Activated CD4-positive, alpha-beta T cell treated with anti-CD3 and anti-CD28 coated beads for 36 hours (primary cell): ENCODE measurements at regions of chr9 and their contacts with region 1.

Region 1: DNA sequence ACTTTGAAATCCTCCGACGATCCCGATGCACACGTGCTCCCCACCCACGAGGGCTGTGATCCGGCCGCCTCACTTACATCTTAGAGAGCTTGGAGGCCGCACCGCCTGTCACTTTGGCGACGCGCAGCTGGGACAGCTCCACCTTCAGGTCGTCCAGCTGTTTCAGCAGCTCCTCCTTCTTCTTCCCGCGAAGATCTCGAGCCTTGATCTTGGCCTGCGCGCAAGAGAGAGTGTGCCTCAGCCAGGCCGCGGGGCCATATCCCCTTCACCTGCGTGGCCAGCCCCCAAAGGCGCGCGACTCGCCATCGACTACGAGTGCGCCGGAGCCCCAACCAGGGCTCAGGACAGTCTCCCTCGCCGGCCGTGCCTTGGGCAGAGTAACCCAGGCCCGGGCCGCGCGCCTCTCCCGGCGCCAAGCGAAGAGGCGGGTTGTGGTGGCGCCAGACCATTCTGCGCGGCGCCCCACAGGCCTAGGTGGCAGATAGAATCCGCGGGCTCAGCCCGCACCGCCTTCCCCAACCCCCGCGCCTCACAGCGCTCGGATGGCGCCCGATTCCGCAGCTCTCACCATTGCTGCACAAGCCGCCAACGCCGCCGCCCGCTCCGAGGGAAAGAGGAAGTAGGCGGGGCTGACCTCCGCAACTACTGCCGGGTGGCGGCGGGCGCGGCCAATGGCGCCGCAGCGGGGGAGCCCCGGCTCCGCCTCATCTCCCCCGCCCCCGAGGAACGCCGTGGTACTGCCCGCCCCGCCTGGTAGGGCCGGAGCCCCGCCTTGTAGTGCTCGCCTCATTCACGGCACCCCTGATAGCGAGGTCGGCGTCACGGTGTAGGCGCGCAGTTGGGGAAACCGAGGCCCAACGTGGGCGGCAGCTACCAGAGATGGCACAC is at the starts of genes ARPC5L and RPL35:
- DNase-seq: peak; percentile 98
- ATAC-seq: peak; percentile 95
- H3K4me3 Mint-ChIP-seq: peak within 1 kb of the TSS; percentile 95
- H3K27ac Mint-ChIP-seq: peak within 1 kb of the TSS; percentile 95
- H3K4me1 Mint-ChIP-seq: peaks cover 46% of the 10 kb centered on the region
- H3K27me3 Mint-ChIP-seq: no peaks in the 10 kb centered on the region
- total RNA-seq, gene ARPC5L: 51.9 to 95.9 TPM
- total RNA-seq, gene RPL35: 2,227 to 2,561 TPM

Region 2: DNA sequence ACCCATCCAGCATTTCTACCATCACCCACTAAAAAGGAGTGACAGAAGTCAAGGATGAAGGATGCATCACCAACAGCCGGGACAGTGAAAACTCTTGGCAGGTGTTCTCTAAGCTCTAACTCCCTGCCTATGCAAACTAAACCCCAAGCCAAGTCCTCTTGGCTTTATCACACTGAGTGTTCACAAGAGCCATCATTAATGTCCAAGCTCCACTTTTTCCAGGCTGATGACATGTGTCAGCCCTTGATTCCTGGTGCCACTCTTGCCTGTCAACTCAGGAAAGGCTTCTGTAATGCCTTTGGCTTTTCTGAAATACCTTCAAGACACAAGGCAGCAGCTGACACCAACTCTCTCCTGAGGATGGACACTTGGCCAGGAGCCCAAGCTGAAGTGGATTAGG is 177.4 kb before region 1 on chr9:
- CTCF ChIA-PET with region 1: no interaction called
- POLR2A ChIA-PET with region 1: no interaction called
- intact Hi-C with region 1: no loop called
- DNase-seq: no peak
- ATAC-seq: no peak
- H3K4me3 Mint-ChIP-seq: no peak overlapping the region
- H3K27ac Mint-ChIP-seq: no peak overlapping the region
- H3K4me1 Mint-ChIP-seq: no peaks in the 10 kb centered on the region
- H3K27me3 Mint-ChIP-seq: peaks cover 9% of the 10 kb centered on the region

Region 3: DNA sequence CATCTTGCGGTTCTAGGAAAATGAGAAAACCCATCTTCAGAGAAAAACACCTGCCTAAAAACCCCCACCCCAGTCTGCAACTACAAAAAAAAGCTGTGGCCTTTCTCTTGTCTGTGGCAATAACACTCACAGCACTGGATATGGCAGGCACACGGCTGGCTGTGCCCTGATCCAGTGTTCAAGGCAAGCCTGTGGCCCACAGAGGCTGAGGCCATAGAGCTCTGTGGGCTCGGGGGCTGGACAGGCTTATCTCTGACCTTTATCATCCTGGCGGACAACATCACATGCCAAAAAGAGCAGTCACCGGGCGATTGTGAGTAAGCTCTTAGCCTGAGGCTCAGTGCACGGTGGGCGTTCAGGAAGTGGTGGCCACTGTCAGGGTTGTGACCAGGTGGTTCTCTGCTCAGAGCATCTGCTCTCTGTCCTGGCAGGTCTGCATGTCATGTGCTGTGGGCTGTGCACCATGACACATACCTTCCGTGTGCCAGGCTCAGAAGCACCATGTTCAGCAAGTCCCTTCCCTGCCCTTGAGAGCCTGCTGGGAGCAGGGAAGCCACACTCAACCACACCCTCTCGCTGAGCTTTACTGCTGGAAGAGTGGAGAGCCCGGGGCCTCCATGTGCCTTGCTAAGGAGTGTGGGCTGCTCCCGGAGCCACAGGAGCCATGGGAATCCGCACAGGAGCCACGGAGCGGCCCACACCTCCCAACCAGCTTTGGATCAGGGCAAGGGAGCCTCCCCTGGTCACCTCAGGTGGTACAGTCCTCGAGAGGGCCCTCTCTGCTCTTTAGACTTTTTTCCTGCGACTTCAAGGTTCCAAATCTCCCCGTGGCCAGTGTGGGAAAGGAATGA is 42.9 kb before region 1 on chr9:
- CTCF ChIA-PET with region 1: no interaction called
- POLR2A ChIA-PET with region 1: no interaction called
- intact Hi-C with region 1: no loop called
- DNase-seq: peak; percentile 51
- ATAC-seq: peak; percentile 86
- H3K4me3 Mint-ChIP-seq: no peak overlapping the region
- H3K27ac Mint-ChIP-seq: peak overlapping the region; percentile 65
- H3K4me1 Mint-ChIP-seq: peaks cover 8% of the 10 kb centered on the region
- H3K27me3 Mint-ChIP-seq: peaks cover 4% of the 10 kb centered on the region

Region 4: DNA sequence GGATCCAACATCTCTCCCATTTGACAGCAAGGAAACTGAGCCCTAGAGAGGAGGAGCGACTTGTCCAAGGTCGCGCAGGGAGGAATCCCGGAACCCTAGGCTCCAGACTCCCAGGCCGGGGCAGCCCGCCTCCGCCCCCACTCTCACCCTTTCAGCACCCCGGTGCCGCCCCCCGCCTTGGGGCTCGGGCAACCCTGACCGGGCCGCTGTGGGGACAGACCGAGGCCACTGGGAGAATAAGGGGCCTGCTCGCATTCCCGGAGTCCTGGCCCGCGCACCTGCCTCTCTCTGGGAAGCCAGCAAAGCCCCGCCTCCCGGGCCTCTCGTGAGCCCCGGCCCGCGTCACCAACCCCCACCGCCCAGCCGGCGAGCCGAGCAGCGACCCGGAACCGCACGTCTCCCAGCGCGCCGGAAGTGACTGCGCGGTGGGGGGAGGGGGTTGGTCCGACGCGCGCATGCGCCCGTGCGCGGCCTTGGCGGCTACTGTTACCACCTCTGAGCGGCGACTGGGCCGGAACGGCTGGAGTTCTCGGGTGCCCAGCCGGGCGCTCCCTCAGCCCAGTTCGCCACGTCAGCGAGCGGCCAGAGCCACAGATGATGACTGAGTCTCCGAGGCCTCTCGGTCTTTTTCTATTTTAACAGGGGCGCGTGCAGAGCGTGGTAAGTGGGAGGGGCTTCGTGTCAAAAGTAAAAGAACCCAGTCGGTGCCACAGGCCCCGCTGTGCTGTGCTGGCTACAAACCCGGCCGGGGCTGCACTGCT is 79.3 kb after region 1 on chr9 and contains the start of gene GOLGA1:
- CTCF ChIA-PET with region 1: no interaction called
- POLR2A ChIA-PET with region 1: interaction called, 4 read pairs
- intact Hi-C with region 1: loop called in 1 of 2 experiments (anchors 1 kb)
- DNase-seq: peak; percentile 96
- ATAC-seq: peak; percentile 89
- H3K4me3 Mint-ChIP-seq: peak within 1 kb of the TSS; percentile 93
- H3K27ac Mint-ChIP-seq: peak within 1 kb of the TSS; percentile 99
- H3K4me1 Mint-ChIP-seq: peaks cover 20% of the 10 kb centered on the region
- H3K27me3 Mint-ChIP-seq: no peaks in the 10 kb centered on the region
- total RNA-seq, gene GOLGA1: 17.4 to 18.3 TPM

Region 5: DNA sequence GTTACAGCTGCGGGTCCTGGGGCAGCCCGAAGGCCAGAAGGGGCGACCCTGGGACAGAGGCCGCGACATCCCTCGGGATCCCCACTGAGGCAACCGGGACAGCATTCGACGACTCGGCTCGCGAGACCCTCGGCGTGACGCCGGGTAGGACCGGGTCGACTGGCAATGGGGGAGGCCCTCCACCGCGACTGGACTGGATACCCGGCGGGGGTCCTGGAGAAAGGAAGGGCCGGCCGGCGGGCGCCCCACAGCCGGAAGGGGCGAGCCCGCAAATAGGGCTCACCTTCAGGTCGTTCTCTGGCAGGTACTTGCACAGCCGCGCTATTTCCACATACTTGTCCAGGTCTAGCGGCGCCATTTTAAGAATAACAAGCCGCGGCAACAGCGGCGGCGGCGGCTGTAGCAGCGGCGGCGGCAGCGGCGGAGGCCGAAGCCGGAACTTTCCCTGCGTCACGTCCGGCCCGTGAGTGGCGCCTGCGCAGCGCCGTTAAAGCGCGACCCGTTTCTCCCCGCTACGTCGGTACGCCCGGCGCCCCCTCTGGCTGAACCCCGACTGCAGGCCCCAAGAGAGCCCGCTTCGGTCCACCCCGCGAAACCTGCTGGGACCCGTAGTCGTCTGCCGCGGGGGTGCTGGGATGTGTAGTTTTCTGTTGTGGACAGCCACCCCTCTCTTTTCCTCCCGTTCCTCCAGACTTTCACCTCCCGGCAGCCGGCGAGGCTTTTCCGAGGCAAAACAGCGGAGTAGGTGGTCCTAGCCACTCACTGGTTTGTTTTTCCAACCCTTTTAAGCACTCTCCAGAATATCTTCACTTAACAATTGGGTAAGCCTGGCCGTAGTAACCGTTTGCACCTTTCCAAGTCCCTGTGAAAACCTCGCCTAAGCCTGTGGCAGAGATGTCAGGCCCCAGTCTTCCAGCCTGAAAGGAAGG is 328.0 kb after region 1 on chr9 and contains the start of gene PPP6C:
- CTCF ChIA-PET with region 1: no interaction called
- POLR2A ChIA-PET with region 1: no interaction called
- intact Hi-C with region 1: loop called (anchors 1 kb)
- DNase-seq: peak; percentile 99
- ATAC-seq: peak; percentile 96
- H3K4me3 Mint-ChIP-seq: peak within 1 kb of the TSS; percentile 83
- H3K27ac Mint-ChIP-seq: peak within 1 kb of the TSS; percentile 86
- H3K4me1 Mint-ChIP-seq: peaks cover 69% of the 10 kb centered on the region
- H3K27me3 Mint-ChIP-seq: no peaks in the 10 kb centered on the region
- total RNA-seq, gene PPP6C: 35.1 to 47.3 TPM

Region 6: GRCh38 chr9:125332527-125332926 is 470.9 kb after region 1 on chr9:
- CTCF ChIA-PET with region 1: no interaction called
- POLR2A ChIA-PET with region 1: no interaction called
- intact Hi-C with region 1: loop called in 1 of 2 experiments (anchors 1 kb)
- DNase-seq: peak; percentile 68
- ATAC-seq: peak; percentile 95
- H3K4me3 Mint-ChIP-seq: no peak overlapping the region
- H3K27ac Mint-ChIP-seq: peak overlapping the region; percentile 51
- H3K4me1 Mint-ChIP-seq: peaks cover 16% of the 10 kb centered on the region
- H3K27me3 Mint-ChIP-seq: no peaks in the 10 kb centered on the region

Region 7: GRCh38 chr9:125706661-125707471 is 845.3 kb after region 1 on chr9 and contains the start of gene MAPKAP1:
- CTCF ChIA-PET with region 1: no interaction called
- POLR2A ChIA-PET with region 1: no interaction called
- intact Hi-C with region 1: loop called in 1 of 2 experiments (anchors 10 kb)
- DNase-seq: peak; percentile 97
- ATAC-seq: peak; percentile 100
- H3K4me3 Mint-ChIP-seq: peak within 1 kb of the TSS; percentile 86
- H3K27ac Mint-ChIP-seq: peak within 1 kb of the TSS; percentile 83
- H3K4me1 Mint-ChIP-seq: peaks cover 44% of the 10 kb centered on the region
- H3K27me3 Mint-ChIP-seq: no peaks in the 10 kb centered on the region
- total RNA-seq, gene MAPKAP1: 51.6 to 61.9 TPM

Region 8: DNA sequence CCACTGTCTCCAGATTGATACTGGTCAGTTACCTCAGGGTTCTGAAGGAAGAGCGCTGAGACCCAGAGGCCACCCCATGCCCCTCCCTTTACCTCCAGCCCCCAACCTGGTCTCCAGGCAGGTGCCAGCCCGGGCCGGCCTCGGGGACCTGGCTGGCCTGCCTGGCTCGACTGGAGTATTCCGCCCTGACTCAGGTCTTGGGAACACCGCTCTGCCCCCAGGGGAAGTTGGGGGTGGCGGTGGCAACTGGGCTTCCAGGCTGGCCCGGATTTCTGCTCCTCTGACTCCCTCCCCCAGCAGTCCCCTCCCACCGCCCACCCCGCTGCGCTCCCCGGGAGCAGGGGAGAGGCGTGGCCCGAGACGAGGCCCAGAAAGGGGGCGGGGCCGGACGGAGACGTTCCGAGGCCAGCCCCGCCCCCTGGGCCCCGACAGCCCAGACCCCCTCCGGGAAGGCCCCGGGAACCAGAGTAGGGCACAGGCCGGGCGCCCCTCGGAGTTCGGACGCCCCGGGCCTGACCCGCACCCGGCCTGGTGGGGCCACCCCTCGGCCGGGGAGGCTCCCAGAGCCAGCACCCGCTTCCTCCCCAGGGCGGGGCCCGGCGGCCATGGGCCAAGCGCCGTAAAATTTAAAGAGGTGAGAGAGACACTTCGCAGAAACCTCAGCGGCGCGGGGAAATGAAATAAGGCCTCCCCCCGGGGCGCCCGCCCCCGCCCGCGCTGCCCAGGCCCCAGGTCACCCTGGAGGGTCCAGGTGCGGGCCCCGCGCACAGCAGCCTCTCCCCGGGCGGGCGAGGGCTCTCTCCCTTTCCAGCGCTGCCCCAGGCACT is 1860.9 kb after region 1 on chr9:
- CTCF ChIA-PET with region 1: no interaction called
- POLR2A ChIA-PET with region 1: no interaction called
- intact Hi-C with region 1: loop called in 1 of 2 experiments (anchors 10 kb)
- DNase-seq: peak; percentile 96
- ATAC-seq: peak; percentile 73
- H3K4me3 Mint-ChIP-seq: peak overlapping the region; percentile 77
- H3K27ac Mint-ChIP-seq: peak overlapping the region; percentile 89
- H3K4me1 Mint-ChIP-seq: peaks cover 43% of the 10 kb centered on the region
- H3K27me3 Mint-ChIP-seq: no peaks in the 10 kb centered on the region

Region 9: GRCh38 chr9:126804696-126805545 is 1943.3 kb after region 1 on chr9 and contains the start of gene ZBTB43:
- CTCF ChIA-PET with region 1: no interaction called
- POLR2A ChIA-PET with region 1: no interaction called
- intact Hi-C with region 1: loop called in 1 of 2 experiments (anchors 5 kb)
- DNase-seq: peak; percentile 99
- ATAC-seq: peak; percentile 85
- H3K4me3 Mint-ChIP-seq: peak within 1 kb of the TSS; percentile 96
- H3K27ac Mint-ChIP-seq: peak within 1 kb of the TSS; percentile 100
- H3K4me1 Mint-ChIP-seq: peaks cover 36% of the 10 kb centered on the region
- H3K27me3 Mint-ChIP-seq: no peaks in the 10 kb centered on the region
- total RNA-seq, gene ZBTB43: 19.3 to 23.0 TPM